ENCODE measurements at regions of chr13 and their contacts with region 1.

Region 1: DNA sequence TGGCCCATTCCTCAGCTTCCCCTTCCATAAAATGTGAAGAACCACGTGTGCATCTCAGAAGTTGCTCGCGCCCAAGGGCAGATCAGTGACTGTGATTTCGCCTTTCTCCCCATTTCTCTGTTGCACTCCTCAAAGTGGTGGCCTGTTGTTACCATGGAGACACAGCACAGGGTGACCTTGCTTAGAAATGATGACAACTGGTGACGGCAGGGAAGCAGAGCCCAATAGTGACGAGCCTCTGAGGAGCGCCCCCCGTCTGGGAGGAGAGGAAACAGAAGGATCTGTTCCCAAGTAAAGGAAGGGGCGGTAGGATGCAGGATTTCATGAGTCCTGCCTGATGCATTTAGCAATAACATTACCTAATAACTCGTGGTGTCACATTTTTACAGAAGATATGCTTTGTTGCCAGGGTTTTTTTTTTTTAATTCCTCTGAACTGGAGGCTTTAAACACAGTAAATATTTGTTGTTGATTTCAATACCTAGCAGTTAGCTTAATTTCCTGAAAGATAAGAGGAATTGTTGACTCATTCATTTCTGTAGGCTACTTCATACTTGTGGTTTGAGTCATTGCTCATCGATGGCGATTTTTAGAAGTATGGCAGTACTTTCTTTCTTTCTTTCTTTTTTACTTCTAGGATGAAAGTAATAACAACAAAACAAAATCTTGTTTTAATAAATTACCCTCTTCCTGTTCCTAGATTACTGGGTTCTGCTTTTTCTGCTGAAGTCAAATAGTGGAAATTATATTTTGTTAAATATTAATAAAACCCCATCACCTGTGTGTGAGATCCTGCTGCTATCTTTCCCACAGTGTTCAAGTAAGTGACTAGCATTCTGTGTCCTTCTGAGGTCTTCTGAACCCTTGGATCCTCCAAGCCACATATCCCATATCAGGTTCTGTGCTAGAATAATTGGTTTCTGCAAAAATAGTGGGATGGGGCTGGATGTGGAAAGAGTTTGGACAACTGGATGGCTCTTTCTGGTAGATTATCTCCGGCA is 36.0 kb downstream of the MBNL2 start:
- DNase-seq: peak; percentile 64 to 81 (median 69)
- ATAC-seq: peak; percentile 70
- H3K4me3 ChIP-seq: no peak overlapping the region
- H3K27ac ChIP-seq: peak overlapping the region; percentile 100
- H3K4me1 ChIP-seq: peaks cover 30 to 76% of the 10 kb centered on the region in 2 experiments
- H3K27me3 ChIP-seq: no peaks in the 10 kb centered on the region
- CTCF ChIP-seq: peak; percentile 28 to 42 (median 32); a peak in 4 of 6 replicates
- EP300 ChIP-seq: peak; percentile 75
- POLR2A ChIP-seq: no peak
- RAD21 ChIP-seq: peak in 1 of 2 experiments; percentile 14; a peak in 1 of 4 replicates

Region 2: GRCh38 chr13:97344265-97345175 is 86.4 kb after region 1 on chr13:
- CTCF ChIA-PET with region 1: no interaction called
- POLR2A ChIA-PET with region 1: no interaction called
- in situ Hi-C with region 1: no loop called
- intact Hi-C with region 1: loop called (anchors 5 kb)
- DNase-seq: peak in 2 of 4 experiments; percentile 22 to 60
- ATAC-seq: peak; percentile 89
- H3K4me3 ChIP-seq: no peak overlapping the region
- H3K27ac ChIP-seq: no peak overlapping the region
- H3K4me1 ChIP-seq: peaks cover 3 to 5% of the 10 kb centered on the region in 2 experiments; a peak in 2 of 5 replicates
- H3K27me3 ChIP-seq: no peaks in the 10 kb centered on the region
- CTCF ChIP-seq: peak; percentile 29 to 60 (median 53); a peak in 5 of 6 replicates
- EP300 ChIP-seq: no peak
- POLR2A ChIP-seq: no peak
- RAD21 ChIP-seq: peak; percentile 41 to 61; a peak in 3 of 4 replicates

Region 3: DNA sequence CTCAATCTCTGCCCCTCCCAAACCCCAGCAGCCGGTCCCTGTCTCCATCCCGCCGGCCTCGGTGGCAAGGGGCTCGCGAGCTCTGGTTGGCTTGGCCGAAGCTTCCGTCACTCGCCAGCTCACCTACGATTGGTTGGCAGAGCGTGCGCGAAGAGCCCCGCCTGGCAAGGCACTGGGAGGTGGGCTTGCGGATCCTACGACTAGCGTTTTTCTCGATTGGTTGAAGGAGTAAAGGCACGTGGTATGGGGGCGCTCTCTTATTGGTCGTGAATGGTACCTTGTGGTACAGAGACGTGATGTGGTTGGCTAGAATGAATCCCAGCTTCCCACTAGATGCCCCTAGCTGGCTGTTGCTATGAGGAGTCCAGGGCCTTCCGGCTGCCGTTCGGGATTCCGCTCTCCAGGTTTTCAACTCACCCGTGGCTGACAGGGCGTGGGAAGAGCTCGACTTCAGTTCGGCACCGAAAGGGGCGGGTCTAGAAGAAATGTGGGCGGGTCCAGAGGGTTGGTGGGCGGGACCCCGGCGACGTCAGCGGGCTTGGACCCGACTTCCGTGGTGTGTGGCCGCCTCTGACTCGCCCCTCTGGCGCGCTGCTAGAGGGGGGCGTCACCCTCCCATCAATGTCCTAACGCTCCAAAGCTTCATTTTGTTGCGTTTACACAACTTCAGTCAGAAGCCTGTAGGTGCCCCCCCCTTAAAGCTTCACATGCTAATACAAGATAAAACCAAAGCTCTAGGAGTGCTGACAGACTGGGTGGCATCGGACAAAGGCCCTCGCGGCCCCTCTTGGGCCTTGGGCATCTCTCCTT is 175.0 kb after region 1 on chr13:
- CTCF ChIA-PET with region 1: no interaction called
- POLR2A ChIA-PET with region 1: no interaction called
- in situ Hi-C with region 1: no loop called
- intact Hi-C with region 1: loop called (anchors 2 kb)
- DNase-seq: peak; percentile 81 to 88 (median 84)
- ATAC-seq: peak; percentile 91
- H3K4me3 ChIP-seq: peak overlapping the region; percentile 49
- H3K27ac ChIP-seq: peak overlapping the region; percentile 85
- H3K4me1 ChIP-seq: peaks cover 6 to 16% of the 10 kb centered on the region in 2 experiments; a peak in 4 of 5 replicates
- H3K27me3 ChIP-seq: no peaks in the 10 kb centered on the region
- CTCF ChIP-seq: no peak
- EP300 ChIP-seq: no peak
- POLR2A ChIP-seq: peak; percentile 69; the same call in 1 of the 2 replicates
- RAD21 ChIP-seq: no peak

Region 4: GRCh38 chr13:97448503-97449230 is 190.6 kb after region 1 on chr13:
- CTCF ChIA-PET with region 1: no interaction called
- POLR2A ChIA-PET with region 1: no interaction called
- in situ Hi-C with region 1: no loop called
- intact Hi-C with region 1: no loop called
- DNase-seq: no peak
- ATAC-seq: no peak
- H3K4me3 ChIP-seq: no peak overlapping the region
- H3K27ac ChIP-seq: no peak overlapping the region
- H3K4me1 ChIP-seq: no peaks in the 10 kb centered on the region; a peak in 1 of 5 replicates
- H3K27me3 ChIP-seq: no peaks in the 10 kb centered on the region
- CTCF ChIP-seq: no peak
- EP300 ChIP-seq: no peak
- POLR2A ChIP-seq: no peak
- RAD21 ChIP-seq: no peak